ENCODE measurements at regions of chr4 and their contacts with region 1.

Region 1: DNA sequence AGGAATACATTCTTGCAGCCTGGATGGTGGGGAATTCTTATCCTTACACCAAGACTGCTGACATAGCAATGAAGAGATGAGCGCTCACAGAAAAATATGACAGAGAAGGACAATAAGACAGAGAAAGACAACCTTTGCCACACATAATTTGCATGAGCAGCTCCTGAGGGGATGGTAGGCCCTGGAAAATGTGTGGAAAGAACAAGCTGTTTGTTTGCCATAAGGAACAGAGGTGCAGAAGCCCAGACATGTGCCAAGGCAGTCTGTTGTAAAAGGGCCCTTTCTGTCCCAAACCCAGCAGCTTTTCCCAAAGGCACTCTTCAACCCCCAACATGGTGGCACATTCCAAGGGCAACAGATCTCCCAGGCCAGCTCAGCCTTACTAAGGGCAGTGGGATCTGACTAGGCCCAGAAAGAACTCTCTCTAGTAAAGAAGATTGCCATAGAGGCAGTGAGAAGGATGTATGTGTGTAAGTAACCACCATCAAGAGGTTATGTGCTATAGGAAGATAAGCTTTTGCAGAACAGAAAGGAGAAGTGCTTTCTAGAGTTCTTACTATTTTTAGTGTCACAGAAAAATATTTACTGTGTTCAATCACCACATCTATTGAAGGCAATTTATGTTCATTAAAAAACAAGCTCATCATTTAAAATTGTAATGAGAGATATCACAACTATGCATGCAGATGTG is 287.0 kb upstream of the RASGEF1B start:
- DNase-seq: no peak

Region 2: GRCh38 chr4:81688085-81688484 is 70.6 kb before region 1 on chr4:
- intact Hi-C with region 1: no loop called
- DNase-seq: no peak

Region 3: DNA sequence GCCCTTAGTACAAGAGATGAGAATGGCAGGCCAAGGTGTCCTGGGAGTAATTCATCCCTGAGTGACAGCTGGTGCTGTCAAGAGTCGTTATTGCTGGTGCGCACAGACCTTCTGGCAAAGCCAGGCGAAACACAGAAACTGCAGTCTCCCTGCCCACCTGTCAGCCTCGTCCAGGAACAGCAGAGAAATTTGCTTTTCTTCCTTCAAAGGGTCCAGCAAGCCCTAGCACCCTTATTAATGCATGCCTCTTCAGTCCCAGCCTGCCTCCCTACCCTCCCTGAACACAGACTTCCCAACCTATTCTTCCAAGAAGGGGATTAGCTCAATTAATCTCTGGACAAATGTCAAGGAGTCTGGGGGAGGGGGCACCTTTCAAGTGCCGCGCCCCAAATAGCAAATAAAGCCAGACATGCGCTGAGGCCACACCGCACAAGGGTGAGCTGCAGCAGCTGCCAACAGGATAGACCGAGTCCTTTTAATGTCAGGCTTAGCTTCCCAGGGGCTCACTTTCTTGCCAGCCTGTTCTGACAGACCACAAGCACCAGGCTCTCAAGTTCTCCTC is 36.3 kb before region 1 on chr4:
- intact Hi-C with region 1: loop called in 1 of 2 experiments (anchors 1 kb)
- DNase-seq: no peak

Measured in posterior vena cava (tissue), 2 donors.